PC-3 (cell line): ENCODE measurements at regions of chr18 and their contacts with region 1.

Region 1: GRCh38 chr18:24734058-24734457 is 273.6 kb downstream of the HRH4 start:
- DNase-seq: peak; percentile 47
- ATAC-seq: peak; percentile 80
- H3K4me3 ChIP-seq: no peak overlapping the region
- H3K27ac ChIP-seq: no peak overlapping the region
- H3K4me1 ChIP-seq: peaks cover 7% of the 10 kb centered on the region; the same call in 1 of the 2 replicates
- H3K27me3 ChIP-seq: peaks cover 63% of the 10 kb centered on the region
- CTCF ChIP-seq: peak; percentile 60; the same call in 1 of the 2 replicates

Region 2: GRCh38 chr18:24543805-24544498 is 190.1 kb before region 1 on chr18:
- CTCF ChIA-PET with region 1: no interaction called
- POLR2A ChIA-PET with region 1: no interaction called
- intact Hi-C with region 1: loop called (anchors 2 kb)
- DNase-seq: peak; percentile 58
- ATAC-seq: peak; percentile 38; the same call in 1 of the 2 replicates
- H3K4me3 ChIP-seq: no peak overlapping the region
- H3K27ac ChIP-seq: no peak overlapping the region
- H3K4me1 ChIP-seq: no peaks in the 10 kb centered on the region
- H3K27me3 ChIP-seq: peaks cover 47% of the 10 kb centered on the region
- CTCF ChIP-seq: peak; percentile 78

Region 3: DNA sequence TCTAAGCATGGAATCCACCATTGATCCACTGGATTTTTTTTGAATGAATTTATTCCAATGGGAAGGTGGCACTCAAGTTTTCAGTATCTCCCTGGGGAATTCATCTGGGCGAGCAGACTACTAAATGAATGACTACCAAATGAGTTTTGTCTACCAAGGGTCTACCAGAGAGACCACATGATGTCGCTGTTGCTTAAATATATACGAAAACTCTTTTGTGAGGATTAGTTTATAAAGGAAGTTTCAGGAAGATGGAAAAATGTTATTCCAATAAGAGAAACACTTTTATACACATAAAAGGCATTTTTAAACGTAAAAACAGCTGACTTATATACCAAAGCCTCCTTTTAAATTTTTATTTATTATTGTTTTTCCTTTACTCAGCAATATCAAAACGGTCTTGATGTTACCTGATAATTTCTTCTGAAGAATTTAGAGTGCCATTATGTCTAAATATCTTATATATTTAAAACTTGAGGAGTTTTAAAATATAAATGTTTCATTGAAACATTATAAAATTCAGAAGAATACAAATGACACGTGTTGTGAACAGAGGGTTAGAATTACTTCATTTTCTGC is 133.9 kb before region 1 on chr18:
- CTCF ChIA-PET with region 1: no interaction called
- POLR2A ChIA-PET with region 1: interaction called, 4 read pairs
- intact Hi-C with region 1: loop called (anchors 2 kb)
- DNase-seq: peak; percentile 69
- ATAC-seq: peak; percentile 64
- H3K4me3 ChIP-seq: no peak overlapping the region
- H3K27ac ChIP-seq: no peak overlapping the region
- H3K4me1 ChIP-seq: no peaks in the 10 kb centered on the region
- H3K27me3 ChIP-seq: peaks cover 78% of the 10 kb centered on the region
- CTCF ChIP-seq: peak; percentile 78